Aorta (tissue), 5 donors: ENCODE measurements at regions of chr6 and their contacts with region 1.

Region 1: GRCh38 chr6:115896538-115897129 is 164.1 kb downstream of the FRK start:
- DNase-seq: no peak
- ATAC-seq: no peak
- H3K4me3 ChIP-seq: no peak overlapping the region
- H3K27ac ChIP-seq: no peak overlapping the region
- H3K4me1 ChIP-seq: no peaks in the 10 kb centered on the region
- H3K27me3 ChIP-seq: no peaks in the 10 kb centered on the region

Region 2: GRCh38 chr6:114747987-114748630 is 1148.5 kb before region 1 on chr6:
- intact Hi-C with region 1: loop called (anchors 5 kb)
- DNase-seq: no peak
- ATAC-seq: no peak
- H3K4me3 ChIP-seq: no peak overlapping the region
- H3K27ac ChIP-seq: no peak overlapping the region
- H3K4me1 ChIP-seq: no peaks in the 10 kb centered on the region
- H3K27me3 ChIP-seq: no peaks in the 10 kb centered on the region

Region 3: DNA sequence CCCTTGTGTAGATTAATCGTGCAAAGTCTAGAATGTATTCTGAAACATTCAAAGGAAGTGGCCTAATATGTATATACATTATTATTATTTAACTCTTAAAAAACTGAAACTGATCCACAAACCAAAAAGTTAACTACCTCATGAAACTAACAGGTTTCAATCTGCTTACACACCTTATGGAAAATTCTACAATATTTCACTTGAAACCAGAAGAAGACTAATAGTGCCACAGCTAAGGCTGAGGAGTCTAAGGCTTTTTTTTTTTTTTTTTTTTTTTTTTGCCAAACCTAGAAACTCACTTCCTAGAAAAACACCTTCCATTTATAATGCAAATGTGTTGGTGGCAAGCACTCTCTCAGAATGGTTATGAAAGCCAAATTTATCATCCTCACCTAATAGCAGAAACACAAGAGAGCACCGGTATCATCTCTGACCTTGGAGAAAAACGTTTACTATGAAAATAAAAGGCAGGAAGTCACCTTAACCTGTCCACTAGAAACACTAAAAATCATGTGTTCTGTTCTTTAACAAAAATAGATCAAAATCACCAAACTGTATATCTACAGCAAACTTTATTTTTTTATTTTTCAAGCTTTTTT is 422.1 kb before region 1 on chr6:
- intact Hi-C with region 1: no loop called
- DNase-seq: no peak
- ATAC-seq: no peak
- H3K4me3 ChIP-seq: no peak overlapping the region
- H3K27ac ChIP-seq: no peak overlapping the region
- H3K4me1 ChIP-seq: no peaks in the 10 kb centered on the region
- H3K27me3 ChIP-seq: no peaks in the 10 kb centered on the region

Region 4: DNA sequence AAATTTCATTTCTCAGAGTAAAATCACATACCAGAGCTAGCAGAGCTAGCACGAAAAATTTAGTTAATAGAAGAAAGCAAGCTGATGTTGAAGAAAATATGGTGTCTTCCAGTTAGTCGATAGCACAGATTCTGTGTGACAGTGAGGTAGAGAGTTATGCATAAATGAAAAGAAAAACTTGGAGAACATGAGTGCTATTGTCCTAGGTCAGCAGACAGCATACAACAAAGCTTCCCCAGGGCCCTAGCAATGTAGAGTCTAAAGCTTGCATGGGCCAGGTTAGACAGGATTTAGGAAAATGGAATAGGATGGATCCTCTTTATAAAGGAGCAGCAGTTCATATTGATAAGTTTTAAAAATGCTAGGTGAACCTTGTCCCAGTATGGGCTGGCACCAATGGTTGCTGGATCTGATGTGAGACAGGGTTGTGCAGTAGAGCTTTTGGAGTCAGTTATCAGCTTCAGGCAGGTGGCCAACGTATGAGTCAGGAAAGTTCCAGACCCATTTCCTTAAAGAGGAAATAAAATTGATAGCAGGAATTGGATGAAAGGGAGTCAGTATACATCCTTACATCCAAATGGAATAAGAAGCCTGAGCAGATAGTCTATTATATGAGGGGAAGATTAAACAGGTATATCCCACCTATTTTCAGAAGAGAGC is 113.1 kb before region 1 on chr6:
- intact Hi-C with region 1: no loop called
- DNase-seq: peak; percentile 51 to 60
- ATAC-seq: peak; percentile 51
- H3K4me3 ChIP-seq: no peak overlapping the region
- H3K27ac ChIP-seq: no peak overlapping the region
- H3K4me1 ChIP-seq: peaks cover 2 to 4% of the 10 kb centered on the region in 2 donors
- H3K27me3 ChIP-seq: no peaks in the 10 kb centered on the region

Region 5: DNA sequence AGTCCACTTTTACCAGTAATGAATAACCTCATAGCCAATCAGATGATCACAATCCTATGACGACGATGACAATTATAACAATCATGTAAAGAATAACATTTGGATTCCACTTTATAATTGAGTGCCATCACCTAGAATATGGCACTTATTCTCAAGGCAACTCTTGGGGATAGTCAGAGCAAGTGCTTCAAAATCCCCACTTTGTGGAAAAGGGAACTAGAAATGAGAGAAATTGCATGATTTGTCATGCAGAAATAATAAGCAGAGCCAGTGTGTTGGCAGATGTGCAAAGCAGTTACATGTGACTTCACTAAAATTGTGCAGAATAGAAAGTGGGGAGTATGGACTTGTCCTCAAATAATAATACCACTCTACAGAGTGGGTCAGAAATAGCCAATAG is 122.8 kb after region 1 on chr6:
- intact Hi-C with region 1: no loop called
- DNase-seq: no peak
- ATAC-seq: no peak
- H3K4me3 ChIP-seq: no peak overlapping the region
- H3K27ac ChIP-seq: no peak overlapping the region
- H3K4me1 ChIP-seq: peaks cover 4 to 16% of the 10 kb centered on the region in 2 donors
- H3K27me3 ChIP-seq: no peaks in the 10 kb centered on the region